ENCODE measurements at regions of chr1 and their contacts with region 1.

Region 1: DNA sequence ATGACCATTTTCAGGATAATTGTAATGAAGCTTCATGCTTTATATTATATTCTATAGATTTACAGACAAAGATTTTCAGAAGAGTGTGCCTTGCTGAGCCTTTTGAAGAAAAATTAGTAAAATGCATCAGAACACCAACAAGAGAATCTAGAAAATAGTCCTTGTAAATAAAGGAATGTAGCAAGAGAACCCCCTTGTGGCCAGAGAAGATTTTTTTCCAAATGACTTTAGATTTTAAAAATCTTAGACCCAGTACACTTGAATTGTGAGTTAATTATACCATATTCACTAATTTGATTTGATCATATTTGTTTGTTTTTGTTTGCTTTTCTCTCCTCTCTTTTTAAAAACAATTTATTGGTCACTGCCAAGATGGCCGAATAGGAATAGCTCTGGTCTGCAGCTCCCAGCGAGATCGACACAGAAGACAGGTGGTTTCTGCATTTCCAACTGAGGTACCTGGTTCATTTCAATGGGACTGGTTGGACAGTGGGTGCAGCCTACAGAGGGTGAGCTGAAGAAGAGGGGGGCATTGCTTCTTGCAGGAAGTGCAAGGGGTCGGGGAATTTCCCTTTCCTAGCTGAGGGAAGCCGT is 12.8 kb upstream of the IFI44L start:
- DNase-seq: peak in 1 of 42 donors; percentile 17

Region 2: DNA sequence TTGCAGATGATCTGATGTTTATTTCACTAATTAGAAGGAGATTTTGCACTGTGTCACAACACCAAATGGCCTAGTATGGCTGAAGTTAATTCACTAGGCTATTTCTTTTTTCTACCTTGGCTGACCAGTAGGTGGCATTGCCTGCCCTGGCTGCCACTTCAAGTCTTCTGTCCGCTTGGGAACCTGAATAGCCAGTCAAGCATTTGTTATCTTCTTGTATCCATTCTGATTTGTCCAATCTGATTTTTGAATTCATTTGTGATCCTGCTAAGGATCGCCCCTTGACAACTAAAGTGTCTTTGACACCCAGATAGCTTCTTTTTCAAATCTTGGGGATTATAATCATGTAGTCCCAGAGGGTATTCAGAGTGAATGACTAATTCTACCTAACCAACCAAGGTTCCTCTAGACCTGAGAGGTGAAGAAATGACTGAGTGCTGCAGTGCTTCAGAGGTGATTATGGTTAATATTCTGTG is 462.3 kb before region 1 on chr1:
- intact Hi-C with region 1: loop called (anchors 10 kb)
- DNase-seq: peak; percentile 12 to 78 (median 47)

Measured in head of caudate nucleus (tissue), 42 donors.